ENCODE measurements at regions of chr21 and their contacts with region 1.

Region 1: GRCh38 chr21:42537106-42537742 is 23.6 kb downstream of the SLC37A1 start:
- DNase-seq: peak; percentile 79
- H3K4me3 ChIP-seq: peak overlapping the region; percentile 80
- H3K27ac ChIP-seq: peak overlapping the region; percentile 98
- H3K4me1 ChIP-seq: peaks cover 64% of the 10 kb centered on the region
- CTCF ChIP-seq: peak; percentile 94

Region 2: DNA sequence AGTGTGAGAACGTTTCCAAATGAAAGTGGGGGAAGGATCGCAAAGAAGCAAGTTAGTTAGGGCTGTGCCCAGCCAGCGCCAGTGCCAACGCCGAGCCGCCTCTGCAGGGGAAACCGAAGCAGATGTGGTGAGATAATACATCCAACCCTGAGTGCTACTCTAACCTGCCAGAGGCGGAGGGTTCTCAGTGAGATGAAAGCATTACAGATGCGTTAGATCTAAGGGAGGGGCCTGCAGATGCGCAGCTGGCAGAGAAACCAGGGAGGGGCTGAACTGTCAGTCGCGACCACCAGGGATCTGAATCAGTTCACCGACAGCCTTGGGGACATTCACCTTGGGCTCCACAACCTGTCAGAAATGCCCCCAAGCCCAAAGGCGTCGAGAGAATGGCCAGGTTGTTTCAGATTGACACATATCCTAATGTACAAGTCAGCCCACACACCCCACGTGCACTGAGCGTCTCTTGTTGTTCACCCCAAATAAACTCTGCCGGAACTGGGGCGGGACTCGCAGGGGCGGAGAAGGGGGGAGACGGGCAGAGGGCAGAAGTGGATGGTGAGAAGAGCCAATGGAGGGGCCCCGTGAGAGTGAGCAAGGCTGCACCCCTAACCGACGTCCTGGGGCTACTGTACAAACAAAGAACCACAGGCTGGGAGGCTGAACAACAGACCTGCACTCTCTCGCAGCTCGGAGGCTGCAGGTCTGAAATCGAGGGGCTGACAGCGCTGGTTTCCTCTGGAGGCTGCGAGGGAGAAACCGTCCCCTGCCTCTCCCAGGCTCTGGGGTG is 474.8 kb before region 1 on chr21:
- CTCF ChIA-PET with region 1: no interaction called
- POLR2A ChIA-PET with region 1: no interaction called
- intact Hi-C with region 1: loop called (anchors 10 kb)
- DNase-seq: peak; percentile 93
- H3K4me3 ChIP-seq: peak overlapping the region; percentile 68
- H3K27ac ChIP-seq: peak overlapping the region; percentile 93
- H3K4me1 ChIP-seq: peaks cover 75% of the 10 kb centered on the region
- CTCF ChIP-seq: no peak

Region 3: DNA sequence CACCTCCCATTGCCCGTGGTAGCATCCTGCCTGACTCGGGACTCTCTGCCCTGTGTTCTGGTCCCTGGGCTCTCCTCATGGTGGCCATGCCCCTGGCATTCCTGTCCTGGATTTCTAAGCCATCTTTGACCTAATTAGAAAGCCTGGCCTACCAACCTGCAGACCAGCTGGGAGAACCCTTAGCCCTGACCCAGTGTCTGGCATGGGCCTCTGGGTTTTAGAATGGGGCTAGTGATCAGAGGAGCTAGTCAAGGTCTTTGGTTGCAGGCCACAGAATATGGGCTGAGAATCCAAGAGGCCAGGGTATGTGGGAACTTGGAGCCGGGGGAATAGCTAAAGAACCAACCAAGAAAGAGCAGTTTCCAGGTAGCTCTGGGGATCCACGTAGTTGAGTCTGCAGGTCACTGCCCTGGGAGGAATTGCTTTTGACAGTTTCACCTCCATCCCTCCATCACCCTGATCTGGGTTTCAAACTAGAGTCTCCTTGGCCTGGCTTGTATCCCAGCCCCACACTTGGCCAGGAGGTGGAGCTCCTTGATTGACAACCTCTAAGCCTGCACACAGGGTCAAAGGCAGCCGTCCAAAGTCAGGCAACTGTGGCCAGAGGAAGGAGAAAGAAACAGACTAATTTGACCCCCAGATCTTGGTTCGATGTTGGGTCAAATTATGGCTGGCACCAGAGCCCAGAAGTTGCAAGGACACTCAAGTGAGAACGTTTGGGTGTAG is 373.0 kb before region 1 on chr21:
- CTCF ChIA-PET with region 1: interaction called, 3 read pairs
- POLR2A ChIA-PET with region 1: no interaction called
- intact Hi-C with region 1: loop called (anchors 1 kb)
- DNase-seq: peak; percentile 87
- H3K4me3 ChIP-seq: no peak overlapping the region
- H3K27ac ChIP-seq: peak overlapping the region; percentile 41
- H3K4me1 ChIP-seq: peaks cover 29% of the 10 kb centered on the region
- CTCF ChIP-seq: peak; percentile 99

Region 4: DNA sequence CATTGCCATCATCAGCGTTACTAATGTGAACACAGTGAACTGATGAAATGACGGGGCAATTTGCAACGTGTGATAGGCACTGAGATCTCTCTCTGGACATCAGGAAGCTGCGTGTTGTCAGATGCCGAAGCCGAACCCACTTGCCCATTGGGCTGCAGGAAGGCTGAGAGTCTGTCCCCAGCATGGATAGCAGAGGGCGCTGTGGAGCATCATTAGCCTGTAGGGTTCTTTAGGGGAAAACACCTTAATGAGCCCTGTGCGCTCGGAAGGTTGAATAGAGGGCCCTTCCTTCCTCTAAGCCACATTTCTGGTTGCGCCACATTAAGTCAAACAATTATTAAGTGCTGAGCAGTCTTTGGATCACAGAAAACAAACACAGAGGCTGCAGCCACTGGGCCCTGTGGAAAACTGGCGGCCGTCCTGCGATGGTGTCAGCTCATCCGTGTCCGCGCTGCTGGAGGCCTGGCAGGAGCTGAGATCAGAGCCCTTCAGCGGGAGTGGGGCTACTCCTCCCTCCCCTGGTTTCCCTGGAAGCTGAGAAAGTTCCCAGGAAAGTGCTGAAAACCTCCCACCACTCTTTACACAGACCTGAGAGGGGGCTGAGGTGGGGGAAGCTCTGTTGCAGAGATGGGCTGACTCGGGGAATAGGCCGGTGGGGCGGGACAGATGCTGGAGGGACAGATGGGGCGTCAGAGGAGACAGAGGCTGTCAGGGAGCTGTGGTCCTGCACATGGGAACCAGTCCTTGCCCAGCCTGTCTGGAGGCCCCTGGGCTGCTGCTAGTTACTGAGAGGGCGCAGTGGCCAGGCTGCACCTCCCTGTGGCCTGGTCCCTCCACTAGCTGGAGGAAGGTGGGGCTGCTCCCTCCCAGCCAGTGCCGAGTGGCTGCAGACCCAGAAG is 199.1 kb before region 1 on chr21:
- CTCF ChIA-PET with region 1: interaction called, 3 read pairs
- POLR2A ChIA-PET with region 1: no interaction called
- intact Hi-C with region 1: loop called (anchors 1 kb)
- DNase-seq: peak; percentile 69
- H3K4me3 ChIP-seq: no peak overlapping the region
- H3K27ac ChIP-seq: no peak overlapping the region
- H3K4me1 ChIP-seq: peaks cover 6% of the 10 kb centered on the region
- CTCF ChIP-seq: peak; percentile 83

Region 5: GRCh38 chr21:42460391-42461204 is 76.6 kb before region 1 on chr21:
- CTCF ChIA-PET with region 1: interaction called, 5 read pairs
- POLR2A ChIA-PET with region 1: interaction called, 13 read pairs
- intact Hi-C with region 1: loop called (anchors 2 kb)
- DNase-seq: peak; percentile 95
- H3K4me3 ChIP-seq: peak overlapping the region; percentile 60
- H3K27ac ChIP-seq: peak overlapping the region; percentile 83
- H3K4me1 ChIP-seq: peaks cover 70% of the 10 kb centered on the region
- CTCF ChIP-seq: no peak

Region 6: GRCh38 chr21:42513985-42514882 is 23.0 kb before region 1 on chr21:
- CTCF ChIA-PET with region 1: interaction called, 4 read pairs
- POLR2A ChIA-PET with region 1: interaction called, 11 read pairs
- intact Hi-C with region 1: no loop called
- DNase-seq: peak; percentile 52
- H3K4me3 ChIP-seq: peak overlapping the region; percentile 97
- H3K27ac ChIP-seq: peak overlapping the region; percentile 32
- H3K4me1 ChIP-seq: peaks cover 22% of the 10 kb centered on the region
- CTCF ChIP-seq: no peak

Region 7: DNA sequence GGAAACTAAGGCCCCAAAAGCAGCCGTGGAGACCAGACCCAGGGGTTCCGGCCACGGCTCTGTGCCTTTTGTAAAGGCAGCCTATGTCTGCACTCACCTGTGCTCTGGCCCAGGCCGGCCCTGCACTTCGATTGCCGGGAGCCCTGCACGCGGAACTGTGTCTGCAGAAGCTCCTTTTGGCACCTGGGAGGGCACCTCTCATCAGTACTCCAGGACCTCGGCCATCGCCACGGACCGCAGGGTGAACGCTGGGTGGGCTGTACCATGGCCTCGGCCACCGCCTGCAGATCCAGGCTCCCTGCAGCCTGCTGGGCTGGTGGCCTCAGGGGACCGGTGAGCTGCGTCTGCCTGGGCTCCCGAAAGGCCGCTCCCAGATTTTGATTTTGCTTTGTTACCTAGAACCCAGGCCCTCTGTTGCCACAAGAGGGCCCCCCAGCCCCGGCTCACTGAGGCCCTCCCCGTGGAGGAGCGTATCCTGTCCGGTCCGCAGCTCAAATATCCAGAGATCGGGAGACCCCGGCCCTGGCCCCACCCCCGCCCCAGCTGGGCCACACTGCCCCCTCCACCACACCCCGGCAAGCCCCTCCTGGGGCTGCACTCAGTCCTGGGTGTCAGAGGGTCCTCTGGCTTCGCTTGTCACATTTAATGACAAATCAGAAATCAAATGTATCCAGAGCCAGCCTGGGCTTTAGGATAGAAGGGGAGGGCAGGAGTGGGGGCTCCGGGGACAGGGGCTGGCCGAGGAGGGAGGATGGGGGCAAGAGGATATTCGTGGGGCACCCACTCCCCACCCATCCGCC is 56.0 kb after region 1 on chr21:
- CTCF ChIA-PET with region 1: no interaction called
- POLR2A ChIA-PET with region 1: no interaction called
- intact Hi-C with region 1: no loop called
- DNase-seq: peak; percentile 80
- H3K4me3 ChIP-seq: no peak overlapping the region
- H3K27ac ChIP-seq: no peak overlapping the region
- H3K4me1 ChIP-seq: peaks cover 23% of the 10 kb centered on the region
- CTCF ChIP-seq: peak; percentile 90

Region 8: DNA sequence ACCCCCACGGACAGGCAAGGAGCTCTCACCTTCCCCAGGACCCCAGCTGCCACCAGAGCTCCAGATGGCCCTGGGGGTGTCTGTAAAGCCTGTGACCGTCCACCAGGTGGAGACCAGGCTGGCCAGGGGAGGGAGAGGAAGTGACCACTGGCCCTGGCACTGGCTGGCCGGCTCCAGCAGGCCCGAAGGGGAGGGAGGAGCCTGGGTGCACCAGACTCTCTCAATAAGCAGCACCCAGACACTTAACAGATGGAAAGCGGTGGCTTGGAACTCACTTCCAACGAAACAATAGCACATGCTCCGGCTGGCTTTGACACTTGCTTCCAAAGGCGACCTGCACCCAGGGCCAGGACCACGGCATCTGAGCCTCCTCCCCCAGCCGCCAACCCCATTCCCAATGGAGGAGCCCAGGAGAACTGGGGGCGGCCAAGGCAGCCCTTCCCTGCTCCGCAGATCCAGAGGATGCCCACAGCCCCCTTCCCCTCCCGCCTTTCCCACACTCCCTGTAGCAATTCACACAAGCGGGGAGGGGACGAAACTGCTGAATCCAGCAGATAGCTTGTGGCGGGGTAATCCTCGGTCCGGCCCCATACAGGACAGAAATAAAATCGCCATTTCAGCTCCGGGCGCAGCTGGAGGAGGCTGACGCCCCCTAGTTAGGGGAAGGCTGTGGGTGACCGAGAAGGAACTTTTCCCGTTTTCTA is 115.5 kb after region 1 on chr21:
- CTCF ChIA-PET with region 1: no interaction called
- POLR2A ChIA-PET with region 1: no interaction called
- intact Hi-C with region 1: loop called (anchors 10 kb)
- DNase-seq: no peak
- H3K4me3 ChIP-seq: peak overlapping the region; percentile 46
- H3K27ac ChIP-seq: no peak overlapping the region
- H3K4me1 ChIP-seq: peaks cover 42% of the 10 kb centered on the region
- CTCF ChIP-seq: no peak; the same call in 1 of the 2 replicates

Region 9: DNA sequence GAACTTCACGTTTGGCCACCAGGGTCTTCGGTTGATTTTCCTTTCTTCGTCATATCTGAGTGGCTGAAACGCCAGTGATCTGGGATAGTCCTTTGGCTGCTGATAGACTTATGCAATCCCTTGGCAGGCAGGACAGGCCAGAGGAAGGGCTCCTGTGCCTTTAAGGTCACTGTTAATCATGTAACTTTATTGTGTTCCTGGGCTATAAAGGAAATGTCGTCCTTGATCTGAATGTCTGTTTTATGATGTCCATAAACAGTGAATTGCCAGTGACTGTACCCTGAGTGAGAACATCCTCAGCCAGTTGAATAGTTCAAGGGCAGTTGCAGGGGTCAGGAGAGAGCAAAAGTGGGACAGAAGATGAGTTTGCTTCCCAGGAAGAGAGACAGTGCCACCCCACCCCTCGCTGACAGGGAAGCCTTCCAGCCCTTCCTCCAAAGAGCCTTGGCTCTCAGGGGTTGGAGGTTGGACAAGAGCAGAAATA is 184.2 kb after region 1 on chr21:
- CTCF ChIA-PET with region 1: no interaction called
- POLR2A ChIA-PET with region 1: no interaction called
- intact Hi-C with region 1: no loop called
- DNase-seq: no peak
- H3K4me3 ChIP-seq: no peak overlapping the region
- H3K27ac ChIP-seq: no peak overlapping the region
- H3K4me1 ChIP-seq: no peaks in the 10 kb centered on the region
- CTCF ChIP-seq: no peak